ENCODE measurements at regions of chr10 and their contacts with region 1.

Region 1: DNA sequence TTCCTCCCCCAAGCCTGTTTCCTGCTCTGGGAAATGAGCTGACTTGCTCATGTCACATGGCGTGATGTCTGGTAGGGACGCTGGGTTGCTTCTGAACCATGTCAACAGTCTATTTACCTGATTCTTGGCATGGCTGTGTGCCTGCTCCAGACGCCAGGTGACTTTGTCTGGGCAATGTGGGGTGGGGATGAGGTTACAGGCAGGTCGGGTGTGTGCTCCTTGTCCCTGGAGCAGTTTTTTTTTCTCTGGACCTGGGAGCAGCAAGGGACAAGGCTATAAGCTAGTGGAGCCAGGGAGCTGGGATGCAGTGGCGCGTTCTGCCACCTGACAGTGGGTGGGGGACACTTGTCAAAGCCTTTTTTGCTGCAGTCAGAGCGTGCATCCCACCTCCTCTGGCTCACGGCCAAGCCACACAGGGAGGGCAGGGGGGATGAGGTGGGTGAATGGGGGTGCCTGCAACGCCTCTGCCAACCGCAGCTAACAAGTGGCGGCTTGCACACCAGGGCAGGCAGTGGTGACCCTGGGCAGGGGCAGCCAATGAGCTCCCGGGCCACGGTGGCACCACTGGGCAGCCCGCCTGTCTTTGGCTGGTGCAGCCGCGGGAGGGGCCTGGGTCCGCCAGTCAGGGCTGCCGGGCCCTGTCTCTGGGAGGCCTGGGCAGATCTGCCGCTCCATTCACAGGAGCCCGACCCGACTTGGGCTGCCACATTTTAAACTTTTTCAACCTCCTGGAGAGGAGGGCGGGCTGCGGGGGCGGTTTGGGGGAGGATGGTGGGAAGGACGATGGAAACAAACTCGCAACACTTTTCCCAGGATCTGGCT is 22.9 kb downstream of the DNAJB12 start:
- DNase-seq: peak; percentile 90 to 93 (median 93)
- H3K4me3 ChIP-seq: peak overlapping the region in 1 of 3 experiments; percentile 67
- H3K4me3 Mint-ChIP-seq: peak overlapping the region; percentile 43 to 80
- H3K27ac ChIP-seq: peak overlapping the region; percentile 60 to 86
- H3K27ac Mint-ChIP-seq: peak overlapping the region; percentile 89 to 97 (median 95)
- H3K4me1 ChIP-seq: peaks cover 88 to 94% of the 10 kb centered on the region in 2 donors
- H3K4me1 Mint-ChIP-seq: peaks cover 91% of the 10 kb centered on the region
- H3K27me3 ChIP-seq: no peaks in the 10 kb centered on the region
- H3K27me3 Mint-ChIP-seq: peaks cover 0 to 8% (median 3%) of the 10 kb centered on the region in 3 donors
- CTCF ChIP-seq: peak; percentile 65

Region 2: GRCh38 chr10:72027498-72027897 is 304.3 kb before region 1 on chr10:
- intact Hi-C with region 1: no loop called
- DNase-seq: no peak
- H3K4me3 ChIP-seq: no peak overlapping the region
- H3K4me3 Mint-ChIP-seq: no peak overlapping the region
- H3K27ac ChIP-seq: no peak overlapping the region
- H3K27ac Mint-ChIP-seq: no peak overlapping the region
- H3K4me1 ChIP-seq: no peaks in the 10 kb centered on the region
- H3K4me1 Mint-ChIP-seq: no peaks in the 10 kb centered on the region
- H3K27me3 ChIP-seq: no peaks in the 10 kb centered on the region
- H3K27me3 Mint-ChIP-seq: peaks cover 8 to 10% (median 9%) of the 10 kb centered on the region in 3 donors
- CTCF ChIP-seq: no peak

Region 3: GRCh38 chr10:72133517-72133916 is 198.3 kb before region 1 on chr10:
- intact Hi-C with region 1: loop called in 1 of 2 experiments (anchors 10 kb)
- DNase-seq: peak; percentile 71 to 73 (median 71)
- H3K4me3 ChIP-seq: no peak overlapping the region
- H3K4me3 Mint-ChIP-seq: no peak overlapping the region
- H3K27ac ChIP-seq: no peak overlapping the region
- H3K27ac Mint-ChIP-seq: peak overlapping the region in 6 of 7 donors; percentile 3 to 86 (median 43)
- H3K4me1 ChIP-seq: peaks cover 17 to 18% of the 10 kb centered on the region in 2 donors
- H3K4me1 Mint-ChIP-seq: peaks cover 30% of the 10 kb centered on the region
- H3K27me3 ChIP-seq: no peaks in the 10 kb centered on the region
- H3K27me3 Mint-ChIP-seq: peaks cover 2 to 8% (median 7%) of the 10 kb centered on the region in 3 donors
- CTCF ChIP-seq: no peak

Region 4: GRCh38 chr10:72215652-72216549 is 115.9 kb before region 1 on chr10 and contains the starts of genes ANAPC16 and ASCC1:
- intact Hi-C with region 1: loop called in 1 of 2 experiments (anchors 5 kb)
- DNase-seq: peak; percentile 83 to 86 (median 84)
- H3K4me3 ChIP-seq: peak within 1 kb of the TSS; percentile 70 to 97 (median 86)
- H3K4me3 Mint-ChIP-seq: peak within 1 kb of the TSS; percentile 98
- H3K27ac ChIP-seq: peak within 1 kb of the TSS; percentile 93 to 99
- H3K27ac Mint-ChIP-seq: peak within 1 kb of the TSS; percentile 97 to 100 (median 99)
- H3K4me1 ChIP-seq: peaks cover 33 to 41% of the 10 kb centered on the region in 2 donors
- H3K4me1 Mint-ChIP-seq: peaks cover 27% of the 10 kb centered on the region
- H3K27me3 ChIP-seq: no peaks in the 10 kb centered on the region
- H3K27me3 Mint-ChIP-seq: peaks cover 0 to 1% (median 0%) of the 10 kb centered on the region in 3 donors
- CTCF ChIP-seq: no peak
- polyA plus RNA-seq, gene ANAPC16: 65.5 to 167 (median 148) TPM
- polyA plus RNA-seq, gene ASCC1: 8.2 to 20.9 (median 17.9) TPM